Activated CD8-positive, alpha-beta T cell treated with anti-CD3 and anti-CD28 coated beads for 36 hours (primary cell): ENCODE measurements at regions of chr16 and their contacts with region 1.

Region 1: DNA sequence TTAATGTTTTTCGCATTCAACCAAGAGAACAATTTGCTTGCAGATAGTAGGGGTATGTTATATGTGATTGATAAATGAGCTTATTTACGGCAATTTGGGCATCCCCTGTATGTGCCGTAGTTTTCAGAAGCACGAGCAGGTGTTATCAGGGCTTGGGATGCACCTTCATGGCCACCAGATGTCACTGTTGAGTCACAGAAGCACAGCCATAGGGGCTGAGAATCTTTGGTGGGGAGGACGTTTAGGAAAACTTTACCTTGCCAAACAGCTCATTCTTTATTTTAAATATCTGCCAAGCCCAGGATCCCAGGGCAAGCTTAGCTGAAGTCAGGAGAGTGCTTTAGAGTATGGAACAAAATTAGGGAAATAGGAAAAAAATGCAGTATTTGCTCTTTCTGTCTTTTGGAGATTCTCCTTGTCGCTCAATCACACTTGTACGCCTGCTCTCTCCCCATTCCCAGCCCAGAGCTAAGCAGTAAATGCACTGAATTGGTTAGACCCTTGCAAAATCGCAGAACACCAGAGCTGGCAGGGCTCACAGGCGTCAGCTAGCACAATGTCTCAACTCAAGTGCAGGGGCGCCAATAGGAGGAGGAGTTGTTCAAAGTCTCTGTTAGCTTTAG is 93.6 kb upstream of the MPHOSPH6 start:
- DNase-seq: peak; percentile 68
- ATAC-seq: peak; percentile 79
- H3K4me3 Mint-ChIP-seq: no peak overlapping the region
- H3K27ac Mint-ChIP-seq: no peak overlapping the region
- H3K4me1 Mint-ChIP-seq: no peaks in the 10 kb centered on the region
- H3K27me3 Mint-ChIP-seq: peaks cover 21% of the 10 kb centered on the region
- CTCF ChIP-seq: peak; percentile 91

Region 2: GRCh38 chr16:82248677-82249076 is 15.0 kb before region 1 on chr16:
- CTCF ChIA-PET with region 1: interaction called, 16 read pairs
- POLR2A ChIA-PET with region 1: no interaction called
- intact Hi-C with region 1: no loop called
- DNase-seq: no peak
- ATAC-seq: no peak
- H3K4me3 Mint-ChIP-seq: no peak overlapping the region
- H3K27ac Mint-ChIP-seq: no peak overlapping the region
- H3K4me1 Mint-ChIP-seq: peaks cover 7% of the 10 kb centered on the region
- H3K27me3 Mint-ChIP-seq: peaks cover 7% of the 10 kb centered on the region
- CTCF ChIP-seq: no peak

Region 3: DNA sequence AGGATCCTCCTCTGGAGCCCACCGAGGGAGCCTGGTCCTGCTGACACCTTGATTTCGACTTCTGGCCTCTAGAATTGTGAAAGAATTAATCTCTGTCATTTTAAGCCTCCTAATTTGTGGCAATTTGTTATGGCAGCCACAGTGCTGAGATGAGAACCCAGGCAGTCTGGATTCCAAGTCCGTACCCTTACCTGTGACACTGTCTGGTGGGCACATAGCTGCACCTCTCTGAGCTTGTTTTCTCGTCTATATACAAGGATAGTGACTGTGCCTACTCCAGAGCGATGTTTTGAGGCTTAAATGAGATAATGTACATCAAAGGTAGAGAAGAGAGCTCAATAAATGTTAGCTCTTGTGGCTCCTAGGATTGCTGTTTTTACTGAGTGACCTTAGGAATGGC is 34.8 kb after region 1 on chr16:
- CTCF ChIA-PET with region 1: interaction called, 14 read pairs
- POLR2A ChIA-PET with region 1: no interaction called
- intact Hi-C with region 1: no loop called
- DNase-seq: no peak
- ATAC-seq: peak; percentile 49
- H3K4me3 Mint-ChIP-seq: no peak overlapping the region
- H3K27ac Mint-ChIP-seq: no peak overlapping the region
- H3K4me1 Mint-ChIP-seq: no peaks in the 10 kb centered on the region
- H3K27me3 Mint-ChIP-seq: peaks cover 6% of the 10 kb centered on the region
- CTCF ChIP-seq: no peak

Region 4: DNA sequence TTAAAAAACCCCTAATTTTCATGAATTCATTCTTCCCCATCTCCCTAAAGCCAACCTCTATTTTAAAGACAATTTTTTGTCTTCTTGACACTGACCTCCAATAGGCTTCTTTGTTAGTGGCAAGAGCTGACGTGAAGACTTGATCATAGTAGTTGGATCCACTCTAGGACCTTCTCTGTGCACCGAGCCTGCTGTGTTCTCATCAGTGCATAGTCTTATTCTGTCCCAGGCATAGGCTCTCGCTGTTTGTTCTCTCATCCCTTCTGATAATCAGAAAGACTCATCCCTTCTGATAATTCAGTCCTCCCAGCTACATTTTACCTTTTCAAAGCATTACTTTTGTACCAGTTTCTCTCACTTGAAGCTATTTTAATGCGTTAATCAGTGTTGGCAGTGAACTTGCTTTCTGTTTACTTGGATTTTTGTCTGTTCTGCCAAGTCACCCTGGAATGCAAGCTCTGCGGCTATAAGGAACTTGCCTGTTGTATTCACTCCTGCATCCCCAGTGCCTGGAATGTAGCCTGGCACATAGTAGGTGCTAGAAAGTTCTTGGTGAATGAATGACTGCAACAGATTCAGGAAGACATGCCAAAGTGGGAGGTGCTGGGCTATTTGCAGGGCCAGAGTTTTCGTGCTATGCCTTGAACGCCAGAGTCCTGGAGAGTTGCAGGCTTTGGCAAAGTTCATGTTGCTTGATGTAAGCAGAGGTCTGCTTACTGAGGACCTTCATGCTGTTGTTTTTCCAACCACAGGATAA is 54.0 kb after region 1 on chr16:
- CTCF ChIA-PET with region 1: no interaction called
- POLR2A ChIA-PET with region 1: no interaction called
- intact Hi-C with region 1: no loop called
- DNase-seq: no peak
- ATAC-seq: no peak
- H3K4me3 Mint-ChIP-seq: no peak overlapping the region
- H3K27ac Mint-ChIP-seq: no peak overlapping the region
- H3K4me1 Mint-ChIP-seq: no peaks in the 10 kb centered on the region
- H3K27me3 Mint-ChIP-seq: peaks cover 8% of the 10 kb centered on the region
- CTCF ChIP-seq: no peak

Region 5: GRCh38 chr16:82456683-82457082 is 193.1 kb after region 1 on chr16:
- CTCF ChIA-PET with region 1: interaction called, 24 read pairs
- POLR2A ChIA-PET with region 1: interaction called, 3 read pairs
- intact Hi-C with region 1: no loop called
- DNase-seq: peak; percentile 60
- ATAC-seq: peak; percentile 77
- H3K4me3 Mint-ChIP-seq: no peak overlapping the region
- H3K27ac Mint-ChIP-seq: no peak overlapping the region
- H3K4me1 Mint-ChIP-seq: no peaks in the 10 kb centered on the region
- H3K27me3 Mint-ChIP-seq: peaks cover 10% of the 10 kb centered on the region
- CTCF ChIP-seq: peak; percentile 60

Region 6: DNA sequence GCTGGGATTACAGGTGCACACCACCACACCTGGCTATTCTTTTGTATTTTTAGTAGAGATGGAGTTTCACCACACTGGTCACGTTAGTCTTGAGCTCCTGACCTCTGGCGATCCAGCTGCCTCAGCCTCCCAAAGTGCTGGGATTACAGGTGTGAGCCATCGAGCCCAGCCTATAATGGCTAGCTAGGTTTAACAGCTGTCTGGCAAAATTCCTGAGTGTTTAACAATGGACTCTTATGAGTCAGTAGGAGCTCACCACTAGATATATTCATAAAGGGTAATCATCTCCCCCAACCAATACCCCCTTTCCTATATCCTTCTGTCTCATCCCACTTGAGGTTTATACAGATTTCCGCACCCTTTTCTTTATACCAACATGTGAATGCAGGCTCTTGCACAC is 271.6 kb after region 1 on chr16:
- CTCF ChIA-PET with region 1: no interaction called
- POLR2A ChIA-PET with region 1: no interaction called
- intact Hi-C with region 1: no loop called
- DNase-seq: no peak
- ATAC-seq: no peak
- H3K4me3 Mint-ChIP-seq: no peak overlapping the region
- H3K27ac Mint-ChIP-seq: no peak overlapping the region
- H3K4me1 Mint-ChIP-seq: no peaks in the 10 kb centered on the region
- H3K27me3 Mint-ChIP-seq: peaks cover 5% of the 10 kb centered on the region
- CTCF ChIP-seq: no peak

Region 7: DNA sequence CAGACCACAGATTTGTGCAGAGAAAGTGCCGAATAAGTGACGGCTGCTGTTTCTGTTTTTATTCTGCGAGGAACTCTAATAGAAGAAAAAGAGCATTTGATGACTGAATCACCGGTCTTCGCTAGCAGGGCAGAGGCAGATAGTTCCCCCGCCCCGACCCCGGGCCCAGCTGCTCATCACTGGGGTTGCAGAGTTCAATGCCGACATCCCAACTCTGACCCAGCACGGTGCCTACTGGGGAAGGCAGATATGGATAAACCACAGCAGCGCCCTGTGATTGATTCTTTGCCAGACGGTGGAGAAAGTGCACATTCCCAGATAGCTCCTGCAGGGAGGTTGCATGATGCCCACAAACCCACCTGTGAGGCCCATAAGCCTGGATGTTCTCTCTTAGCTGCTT is 1186.2 kb after region 1 on chr16:
- CTCF ChIA-PET with region 1: interaction called, 11 read pairs
- POLR2A ChIA-PET with region 1: no interaction called
- intact Hi-C with region 1: loop called (anchors 5 kb)
- DNase-seq: no peak
- ATAC-seq: no peak
- H3K4me3 Mint-ChIP-seq: no peak overlapping the region
- H3K27ac Mint-ChIP-seq: no peak overlapping the region
- H3K4me1 Mint-ChIP-seq: no peaks in the 10 kb centered on the region
- H3K27me3 Mint-ChIP-seq: no peaks in the 10 kb centered on the region
- CTCF ChIP-seq: no peak